ENCODE measurements at regions of chr10 and their contacts with region 1.

Region 1: DNA sequence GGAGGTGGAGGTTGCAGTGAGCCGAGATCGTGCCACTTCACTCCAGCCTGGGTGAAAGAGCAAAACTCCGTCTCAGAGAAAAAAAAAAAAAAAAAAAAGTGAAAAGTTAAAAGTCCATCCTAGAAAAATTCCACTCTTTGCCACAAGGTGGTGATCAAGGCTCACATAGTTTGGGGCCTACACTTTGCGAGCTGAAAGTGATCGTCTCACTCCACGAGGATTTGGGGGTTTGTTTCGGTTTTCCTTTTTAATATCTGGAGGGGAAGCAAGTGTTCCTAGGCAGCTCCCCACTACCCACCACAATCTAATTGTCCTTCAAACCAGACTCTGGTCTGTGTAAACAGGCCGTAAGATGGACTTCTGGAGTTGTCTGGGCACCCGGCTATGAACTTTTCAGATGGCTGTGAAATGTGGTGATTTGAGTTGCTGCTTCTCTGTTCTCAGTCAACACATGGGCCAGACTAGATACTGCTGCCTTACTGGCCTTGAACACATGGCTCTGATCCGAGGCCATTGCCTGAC is 27.1 kb downstream of the PRLHR start:
- DNase-seq: peak in 4 of 5 donors; percentile 34 to 67 (median 51)
- H3K4me3 ChIP-seq: no peak overlapping the region
- H3K4me3 Mint-ChIP-seq: no peak overlapping the region
- H3K27ac ChIP-seq: no peak overlapping the region
- H3K27ac Mint-ChIP-seq: peak overlapping the region in 1 of 8 donors; percentile 66
- H3K4me1 ChIP-seq: peaks cover 11% of the 10 kb centered on the region
- H3K4me1 Mint-ChIP-seq: peaks cover 2 to 7% (median 4%) of the 10 kb centered on the region in 3 donors
- H3K27me3 ChIP-seq: no peaks in the 10 kb centered on the region
- H3K27me3 Mint-ChIP-seq: peaks cover 10 to 25% of the 10 kb centered on the region in 2 donors

Region 2: GRCh38 chr10:118584181-118584954 is 16.0 kb after region 1 on chr10:
- CTCF ChIA-PET with region 1: interaction called, 14 read pairs
- POLR2A ChIA-PET with region 1: no interaction called
- DNase-seq: no peak
- H3K4me3 ChIP-seq: no peak overlapping the region
- H3K4me3 Mint-ChIP-seq: no peak overlapping the region
- H3K27ac ChIP-seq: no peak overlapping the region
- H3K27ac Mint-ChIP-seq: peak overlapping the region in 1 of 8 donors; percentile 8
- H3K4me1 ChIP-seq: no peaks in the 10 kb centered on the region
- H3K4me1 Mint-ChIP-seq: no peaks in the 10 kb centered on the region
- H3K27me3 ChIP-seq: no peaks in the 10 kb centered on the region
- H3K27me3 Mint-ChIP-seq: peaks cover 9 to 25% of the 10 kb centered on the region in 2 donors

Region 3: DNA sequence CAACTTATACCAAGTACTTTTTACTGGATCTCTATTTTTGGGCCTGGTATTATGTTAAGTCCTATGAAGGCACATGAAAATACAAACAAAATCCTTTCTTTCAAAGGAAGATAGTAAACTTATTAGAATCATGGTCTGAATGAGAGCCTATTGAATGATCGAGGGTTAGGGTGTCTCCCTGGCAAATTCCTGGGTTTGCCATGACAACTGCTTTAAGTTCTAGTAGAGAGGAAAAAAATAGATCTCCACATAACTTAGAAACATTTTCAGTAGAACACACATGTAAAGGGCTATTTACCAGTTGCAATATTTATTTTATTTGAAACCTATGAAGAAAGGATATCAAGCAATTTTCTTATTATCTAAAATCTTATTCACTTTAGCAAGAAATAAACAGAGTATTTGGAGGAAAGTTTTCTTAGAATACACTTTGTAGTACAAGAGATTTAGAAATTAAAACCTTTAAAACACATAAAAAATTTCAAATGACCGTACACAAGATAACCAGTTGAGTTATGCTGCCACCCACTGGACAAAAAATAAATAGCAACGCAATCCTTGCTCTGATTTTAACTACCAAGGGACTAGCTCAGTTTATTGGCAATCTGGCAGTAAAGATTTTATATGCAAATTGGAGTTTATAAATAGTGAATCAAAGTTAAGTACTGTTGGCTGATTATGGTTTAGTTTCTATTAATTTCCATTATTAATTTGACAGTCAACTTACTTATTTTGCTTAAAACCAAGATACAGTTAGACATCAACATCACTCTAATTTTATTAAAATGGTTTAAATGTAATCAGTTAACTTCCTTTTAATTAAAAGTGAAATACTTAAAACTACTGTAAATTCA is 152.5 kb after region 1 on chr10:
- CTCF ChIA-PET with region 1: interaction called, 52 read pairs
- POLR2A ChIA-PET with region 1: interaction called, 3 read pairs
- DNase-seq: peak; percentile 24 to 61 (median 54)
- H3K4me3 ChIP-seq: no peak overlapping the region
- H3K4me3 Mint-ChIP-seq: no peak overlapping the region
- H3K27ac ChIP-seq: no peak overlapping the region
- H3K27ac Mint-ChIP-seq: no peak overlapping the region
- H3K4me1 ChIP-seq: peaks cover 7% of the 10 kb centered on the region
- H3K4me1 Mint-ChIP-seq: peaks cover 0 to 13% (median 6%) of the 10 kb centered on the region in 3 donors
- H3K27me3 ChIP-seq: no peaks in the 10 kb centered on the region
- H3K27me3 Mint-ChIP-seq: no peaks in the 10 kb centered on the region

Region 4: DNA sequence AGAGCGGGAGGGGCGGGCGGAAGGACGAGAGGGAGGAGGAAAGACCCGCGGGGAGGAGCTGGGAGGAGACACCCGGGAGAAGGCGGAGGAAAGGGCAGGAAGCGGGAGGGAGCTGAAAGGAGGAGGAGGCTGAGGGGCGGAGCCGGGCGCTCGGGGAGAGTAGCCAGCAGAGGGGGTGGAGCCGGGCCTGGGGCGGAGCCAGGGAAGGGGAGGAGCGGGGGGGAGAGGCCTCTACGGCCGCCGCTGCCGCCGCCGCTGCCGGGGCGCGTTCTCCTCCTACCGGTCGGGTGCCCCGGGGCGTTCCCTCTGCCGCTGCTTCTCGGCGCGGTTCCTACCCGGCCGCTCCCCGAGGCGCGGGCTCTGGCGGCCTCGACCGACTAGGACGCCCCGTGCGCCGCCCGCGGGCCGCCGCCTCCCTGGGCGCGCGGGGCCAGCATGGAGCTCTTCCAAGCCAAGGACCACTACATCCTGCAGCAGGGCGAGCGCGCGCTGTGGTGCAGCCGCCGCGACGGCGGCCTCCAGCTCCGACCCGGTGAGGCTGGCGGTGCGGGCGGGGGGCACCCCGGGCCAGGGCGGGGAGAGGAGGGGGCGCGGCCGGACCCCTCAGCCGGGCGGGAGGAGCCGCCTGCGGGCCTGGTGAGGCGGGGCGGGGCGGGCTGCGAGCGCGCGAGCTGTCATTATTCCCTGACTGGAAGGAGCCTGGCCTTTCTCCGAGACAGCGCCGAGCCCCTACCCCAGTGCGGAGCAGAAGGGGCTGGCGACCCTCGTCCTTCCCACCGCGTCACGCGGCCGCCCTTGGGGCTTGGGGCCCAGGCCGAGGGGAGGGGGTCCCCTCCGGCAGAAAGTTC is 1157.7 kb after region 1 on chr10 and contains the start of gene INPP5F:
- CTCF ChIA-PET with region 1: no interaction called
- POLR2A ChIA-PET with region 1: no interaction called
- DNase-seq: peak; percentile 96 to 100 (median 98)
- H3K4me3 ChIP-seq: peak within 1 kb of the TSS; percentile 73
- H3K4me3 Mint-ChIP-seq: peak within 1 kb of the TSS; percentile 89 to 93 (median 90)
- H3K27ac ChIP-seq: peak within 1 kb of the TSS; percentile 72
- H3K27ac Mint-ChIP-seq: peak within 1 kb of the TSS; percentile 51 to 98 (median 84)
- H3K4me1 ChIP-seq: peaks cover 15% of the 10 kb centered on the region
- H3K4me1 Mint-ChIP-seq: peaks cover 17 to 35% (median 29%) of the 10 kb centered on the region in 3 donors
- H3K27me3 ChIP-seq: no peaks in the 10 kb centered on the region
- H3K27me3 Mint-ChIP-seq: no peaks in the 10 kb centered on the region
- total RNA-seq, gene INPP5F: 22.3 to 23.0 TPM

Measured in CD8-positive, alpha-beta memory T cell (primary cell).